ENCODE measurements at regions of chr15 and their contacts with region 1.

Region 1: GRCh38 chr15:64209680-64210334 is 47.0 kb upstream of the PPIB start:
- DNase-seq: peak; percentile 51
- H3K4me3 ChIP-seq: no peak overlapping the region
- H3K27ac ChIP-seq: no peak overlapping the region
- H3K4me1 ChIP-seq: peaks cover 4% of the 10 kb centered on the region
- CTCF ChIP-seq: peak; percentile 86

Region 2: GRCh38 chr15:64232400-64232799 is 22.6 kb after region 1 on chr15:
- CTCF ChIA-PET with region 1: no interaction called
- POLR2A ChIA-PET with region 1: no interaction called
- intact Hi-C with region 1: no loop called
- DNase-seq: no peak
- H3K4me3 ChIP-seq: no peak overlapping the region
- H3K27ac ChIP-seq: no peak overlapping the region
- H3K4me1 ChIP-seq: no peaks in the 10 kb centered on the region
- CTCF ChIP-seq: no peak

Region 3: DNA sequence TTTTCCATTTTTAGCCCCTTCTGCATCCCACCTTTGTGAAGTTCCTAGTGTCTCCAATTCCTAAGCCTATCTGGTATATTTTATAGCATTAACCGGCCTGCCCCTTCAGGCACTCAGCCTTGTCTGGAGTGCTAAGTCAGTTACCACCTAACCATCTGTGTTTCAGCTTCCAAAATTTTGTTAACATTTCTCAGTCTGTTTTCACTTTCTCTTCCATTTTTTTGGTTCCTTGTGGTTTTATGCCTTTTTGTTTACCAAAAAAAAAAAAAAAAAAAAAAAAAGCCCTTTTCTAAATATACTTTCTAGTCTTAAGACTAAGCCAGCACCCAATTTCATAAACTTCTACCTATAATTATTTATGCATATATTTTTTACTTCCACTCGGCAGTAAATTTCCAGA is 53.8 kb after region 1 on chr15:
- CTCF ChIA-PET with region 1: no interaction called
- POLR2A ChIA-PET with region 1: no interaction called
- intact Hi-C with region 1: loop called (anchors 10 kb)
- DNase-seq: no peak
- H3K4me3 ChIP-seq: no peak overlapping the region
- H3K27ac ChIP-seq: no peak overlapping the region
- H3K4me1 ChIP-seq: no peaks in the 10 kb centered on the region
- CTCF ChIP-seq: no peak

Region 4: DNA sequence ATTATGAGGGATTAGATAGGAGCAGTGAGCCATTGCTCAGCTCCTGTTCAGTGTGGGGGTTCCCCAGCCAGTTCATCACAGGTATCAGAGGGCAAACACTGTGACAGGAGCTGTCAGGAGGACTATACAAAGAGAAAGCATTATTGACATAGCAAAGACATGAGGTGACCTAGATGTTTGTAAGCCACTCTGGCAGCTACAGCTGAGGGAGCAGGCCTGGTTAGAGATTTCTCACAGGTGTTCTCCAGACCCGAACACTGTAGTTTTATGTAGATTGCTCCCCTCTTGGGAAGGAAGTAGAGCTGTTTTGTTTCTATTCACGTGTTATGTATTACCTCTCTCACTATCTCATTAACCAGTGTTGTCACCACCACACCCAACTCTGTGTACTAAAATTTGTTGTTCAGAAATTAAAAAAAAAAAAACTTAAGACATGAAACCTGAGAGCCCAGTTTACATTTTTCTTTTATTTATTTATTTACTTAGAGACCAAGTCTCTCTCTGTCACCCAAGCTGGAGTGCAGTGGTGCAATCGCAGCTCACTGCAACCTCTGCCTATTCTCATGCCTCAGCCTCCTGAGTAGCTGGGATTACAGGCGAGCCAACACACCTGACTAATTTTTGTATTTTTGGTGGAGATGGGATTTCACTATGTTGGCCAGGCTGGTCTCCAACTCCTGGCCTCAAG is 441.9 kb after region 1 on chr15:
- CTCF ChIA-PET with region 1: no interaction called
- POLR2A ChIA-PET with region 1: no interaction called
- intact Hi-C with region 1: loop called (anchors 10 kb)
- DNase-seq: peak; percentile 60
- H3K4me3 ChIP-seq: no peak overlapping the region
- H3K27ac ChIP-seq: no peak overlapping the region
- H3K4me1 ChIP-seq: peaks cover 17% of the 10 kb centered on the region
- CTCF ChIP-seq: no peak

Measured in OCI-LY7 (cell line).